Activated CD4-positive, alpha-beta memory T cell treated with anti-CD3 and anti-CD28 coated beads for 36 hours (primary cell): ENCODE measurements at regions of chr17 and their contacts with region 1.

Region 1: DNA sequence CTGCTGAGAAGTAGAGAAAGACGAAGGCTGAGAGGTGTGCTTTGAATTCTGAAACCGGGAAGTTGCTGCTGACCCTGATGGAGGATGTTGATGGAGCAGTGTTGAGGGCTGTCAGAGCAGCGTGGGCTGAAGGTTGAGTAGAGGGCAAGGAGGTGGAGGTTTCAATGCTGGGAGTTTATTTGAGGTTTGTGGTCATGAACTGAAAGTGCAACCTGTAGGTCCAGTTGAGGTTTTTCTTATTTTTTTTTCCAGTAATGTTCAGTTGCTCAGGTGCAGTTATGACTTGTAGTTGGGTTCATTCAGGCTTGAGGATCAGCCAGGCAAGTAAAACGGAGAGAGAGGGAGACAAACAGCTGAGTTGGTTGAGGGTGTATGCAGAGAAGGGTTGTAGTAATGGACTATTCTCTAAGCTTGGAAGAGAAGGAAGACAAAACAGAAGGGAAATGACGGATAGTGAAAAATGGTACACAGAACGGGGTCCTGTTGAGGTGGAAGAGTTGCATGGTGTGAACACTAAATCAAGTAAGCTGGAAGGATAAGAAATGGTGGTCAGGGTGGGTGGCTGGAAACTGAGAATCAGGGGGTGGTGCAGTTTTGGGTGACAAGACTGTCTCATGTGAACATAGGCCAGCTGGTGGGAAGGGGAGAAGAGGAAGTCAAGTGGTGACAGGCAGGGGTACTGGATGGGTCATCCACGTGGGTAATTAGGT is 8.7 kb upstream of the UBE2G1 start:
- DNase-seq: peak; percentile 89
- H3K4me3 Mint-ChIP-seq: peak overlapping the region; percentile 25
- H3K27ac Mint-ChIP-seq: peak overlapping the region; percentile 93
- H3K4me1 Mint-ChIP-seq: peaks cover 24% of the 10 kb centered on the region
- H3K27me3 Mint-ChIP-seq: no peaks in the 10 kb centered on the region

Region 2: GRCh38 chr17:4394208-4395110 is 19.3 kb after region 1 on chr17:
- CTCF ChIA-PET with region 1: no interaction called
- POLR2A ChIA-PET with region 1: interaction called, 7 read pairs
- intact Hi-C with region 1: loop called (anchors 1 kb)
- DNase-seq: no peak
- H3K4me3 Mint-ChIP-seq: no peak overlapping the region
- H3K27ac Mint-ChIP-seq: no peak overlapping the region
- H3K4me1 Mint-ChIP-seq: peaks cover 17% of the 10 kb centered on the region
- H3K27me3 Mint-ChIP-seq: peaks cover 2% of the 10 kb centered on the region

Region 3: GRCh38 chr17:4463818-4464476 is 88.8 kb after region 1 on chr17:
- CTCF ChIA-PET with region 1: no interaction called
- POLR2A ChIA-PET with region 1: no interaction called
- intact Hi-C with region 1: no loop called
- DNase-seq: no peak
- H3K4me3 Mint-ChIP-seq: no peak overlapping the region
- H3K27ac Mint-ChIP-seq: no peak overlapping the region
- H3K4me1 Mint-ChIP-seq: no peaks in the 10 kb centered on the region
- H3K27me3 Mint-ChIP-seq: no peaks in the 10 kb centered on the region

Region 4: DNA sequence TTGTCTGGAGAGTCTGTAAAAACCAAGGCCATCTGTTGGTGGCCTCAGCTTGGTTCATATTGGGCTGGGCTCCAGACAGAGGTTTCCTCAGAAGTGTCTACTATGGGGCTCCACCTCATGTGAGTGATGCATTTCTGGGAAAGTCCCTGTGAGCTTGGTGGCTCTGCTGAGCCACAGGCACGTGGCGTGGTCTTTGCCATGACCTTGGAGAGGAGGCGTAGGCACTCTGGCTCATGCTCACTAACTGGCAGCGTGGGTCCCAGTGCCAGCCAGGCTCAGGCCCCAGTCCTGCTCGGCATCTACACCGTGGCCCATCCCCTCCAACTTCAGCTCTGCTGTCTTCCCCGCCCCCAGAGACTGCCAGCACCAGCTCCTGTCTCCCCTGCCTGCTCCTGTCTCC is 198.5 kb after region 1 on chr17:
- CTCF ChIA-PET with region 1: no interaction called
- POLR2A ChIA-PET with region 1: interaction called, 4 read pairs
- intact Hi-C with region 1: loop called (anchors 2 kb)
- DNase-seq: peak; percentile 92
- H3K4me3 Mint-ChIP-seq: no peak overlapping the region
- H3K27ac Mint-ChIP-seq: peak overlapping the region; percentile 57
- H3K4me1 Mint-ChIP-seq: peaks cover 20% of the 10 kb centered on the region
- H3K27me3 Mint-ChIP-seq: peaks cover 4% of the 10 kb centered on the region

Region 5: GRCh38 chr17:4696437-4696805 is 321.2 kb after region 1 on chr17:
- CTCF ChIA-PET with region 1: no interaction called
- POLR2A ChIA-PET with region 1: interaction called, 3 read pairs
- intact Hi-C with region 1: loop called (anchors 2 kb)
- DNase-seq: peak; percentile 52
- H3K4me3 Mint-ChIP-seq: peak overlapping the region; percentile 21
- H3K27ac Mint-ChIP-seq: peak overlapping the region; percentile 88
- H3K4me1 Mint-ChIP-seq: peaks cover 55% of the 10 kb centered on the region
- H3K27me3 Mint-ChIP-seq: no peaks in the 10 kb centered on the region